Activated naive CD4-positive, alpha-beta T cell treated with anti-CD3 and anti-CD28 coated beads, Interleukin-2, amount 10 ng/mL, durations not matched to agents 7 days and 5 days (primary cell): ENCODE measurements at regions of chr6 and their contacts with region 1.

Region 1: GRCh38 chr6:52233975-52234823 is 10.1 kb downstream of the IL17F start:
- DNase-seq: peak; percentile 25
- H3K4me3 Mint-ChIP-seq: no peak overlapping the region
- H3K27ac Mint-ChIP-seq: no peak overlapping the region
- H3K4me1 Mint-ChIP-seq: peaks cover 6% of the 10 kb centered on the region
- H3K27me3 Mint-ChIP-seq: peaks cover 40% of the 10 kb centered on the region

Region 2: GRCh38 chr6:52162940-52163908 is 71.0 kb before region 1 on chr6:
- CTCF ChIA-PET with region 1: interaction called, 20 read pairs
- DNase-seq: no peak
- H3K4me3 Mint-ChIP-seq: no peak overlapping the region
- H3K27ac Mint-ChIP-seq: no peak overlapping the region
- H3K4me1 Mint-ChIP-seq: peaks cover 3% of the 10 kb centered on the region
- H3K27me3 Mint-ChIP-seq: peaks cover 7% of the 10 kb centered on the region

Region 3: DNA sequence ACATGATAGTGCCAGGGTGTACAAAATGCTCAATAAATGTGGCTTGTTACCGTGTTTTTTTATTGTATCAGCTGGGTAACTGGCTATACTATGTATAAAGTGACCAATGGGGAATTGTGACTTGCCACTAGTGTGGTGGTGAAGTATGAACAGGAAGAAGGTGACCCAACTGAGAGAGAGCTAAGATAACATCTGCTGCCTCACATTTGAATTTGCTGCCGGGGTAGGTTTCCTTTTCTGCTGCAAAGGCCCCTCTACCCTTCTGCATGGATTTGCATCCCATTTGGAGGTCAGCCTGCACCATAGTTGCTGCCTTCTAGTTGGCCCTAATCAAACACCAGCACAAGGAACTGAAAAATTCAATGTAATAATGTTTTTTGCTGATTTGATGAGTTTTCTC is 24.0 kb before region 1 on chr6:
- CTCF ChIA-PET with region 1: interaction called, 28 read pairs
- DNase-seq: no peak
- H3K4me3 Mint-ChIP-seq: no peak overlapping the region
- H3K27ac Mint-ChIP-seq: no peak overlapping the region
- H3K4me1 Mint-ChIP-seq: peaks cover 12% of the 10 kb centered on the region
- H3K27me3 Mint-ChIP-seq: peaks cover 19% of the 10 kb centered on the region